ENCODE measurements at regions of chr11 and their contacts with region 1.

Region 1: GRCh38 chr11:75534259-75535069 is 8.7 kb upstream of the GDPD5 start:
- DNase-seq: no peak
- ATAC-seq: no peak
- H3K4me3 ChIP-seq: no peak overlapping the region
- H3K27ac ChIP-seq: no peak overlapping the region
- H3K4me1 ChIP-seq: peaks cover 7% of the 10 kb centered on the region
- H3K27me3 ChIP-seq: no peaks in the 10 kb centered on the region
- CTCF ChIP-seq: no peak

Region 2: GRCh38 chr11:75445315-75445953 is 89.0 kb before region 1 on chr11:
- intact Hi-C with region 1: loop called (anchors 2 kb)
- DNase-seq: peak; percentile 84
- ATAC-seq: peak; percentile 83
- H3K4me3 ChIP-seq: no peak overlapping the region
- H3K27ac ChIP-seq: no peak overlapping the region
- H3K4me1 ChIP-seq: no peaks in the 10 kb centered on the region
- H3K27me3 ChIP-seq: no peaks in the 10 kb centered on the region
- CTCF ChIP-seq: peak; percentile 95

Region 3: GRCh38 chr11:75480185-75481175 is 54.0 kb before region 1 on chr11:
- intact Hi-C with region 1: no loop called
- DNase-seq: no peak
- ATAC-seq: no peak
- H3K4me3 ChIP-seq: no peak overlapping the region
- H3K27ac ChIP-seq: no peak overlapping the region
- H3K4me1 ChIP-seq: peaks cover 18% of the 10 kb centered on the region
- H3K27me3 ChIP-seq: no peaks in the 10 kb centered on the region
- CTCF ChIP-seq: no peak

Measured in upper lobe of right lung (tissue), 1 donor.